Natural killer cell (primary cell): ENCODE measurements at regions of chr11 and their contacts with region 1.

Region 1: DNA sequence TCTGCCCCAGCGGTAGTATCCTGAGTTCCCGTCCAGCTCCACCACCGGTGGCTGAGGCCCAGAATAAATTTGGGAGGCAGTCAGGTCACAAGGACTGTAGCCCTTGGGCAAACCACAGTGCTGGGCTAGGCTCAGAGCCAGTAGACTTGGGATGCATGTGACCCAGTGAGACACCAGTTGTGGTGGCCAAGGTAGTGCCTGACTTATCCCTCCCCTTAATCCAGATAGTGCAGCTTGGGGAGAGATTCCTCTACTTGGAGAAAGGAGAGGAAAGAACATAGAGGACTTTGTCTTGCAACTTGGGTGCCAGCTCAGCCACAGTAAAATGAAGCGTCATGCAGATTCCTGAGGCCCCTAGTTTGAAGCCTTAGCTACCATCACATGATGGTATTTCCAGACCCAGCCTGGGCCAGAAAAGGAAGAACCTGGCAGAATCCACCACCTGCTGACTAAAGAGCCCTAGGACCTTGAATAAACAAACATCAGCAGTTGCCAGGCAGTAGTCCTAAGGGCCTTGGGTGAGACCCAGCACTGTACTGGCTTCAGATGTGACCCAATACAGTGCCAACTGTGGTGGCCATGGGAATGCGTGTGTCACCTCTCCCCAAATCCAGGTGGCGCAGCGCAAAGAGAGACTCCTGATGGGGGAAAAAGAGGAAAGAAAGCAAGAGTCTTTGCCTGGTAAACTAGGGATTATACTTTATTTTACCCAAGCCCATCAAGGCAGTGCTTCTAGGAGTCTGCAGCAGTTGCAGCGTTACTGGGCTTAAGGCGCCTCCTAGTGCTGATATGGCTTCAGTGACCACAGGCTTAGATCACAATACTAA is 17.0 kb upstream of the DDX10 start:
- DNase-seq: peak; percentile 37 to 82
- ATAC-seq: peak; percentile 75 to 96 (median 92)
- H3K4me3 ChIP-seq: no peak overlapping the region
- H3K4me3 Mint-ChIP-seq: no peak overlapping the region
- H3K27ac ChIP-seq: no peak overlapping the region
- H3K27ac Mint-ChIP-seq: no peak overlapping the region
- H3K4me1 ChIP-seq: no peaks in the 10 kb centered on the region
- H3K4me1 Mint-ChIP-seq: no peaks in the 10 kb centered on the region
- H3K27me3 ChIP-seq: no peaks in the 10 kb centered on the region
- H3K27me3 Mint-ChIP-seq: peaks cover 3 to 9% of the 10 kb centered on the region in 2 donors
- CTCF ChIP-seq: peak; percentile 79

Region 2: DNA sequence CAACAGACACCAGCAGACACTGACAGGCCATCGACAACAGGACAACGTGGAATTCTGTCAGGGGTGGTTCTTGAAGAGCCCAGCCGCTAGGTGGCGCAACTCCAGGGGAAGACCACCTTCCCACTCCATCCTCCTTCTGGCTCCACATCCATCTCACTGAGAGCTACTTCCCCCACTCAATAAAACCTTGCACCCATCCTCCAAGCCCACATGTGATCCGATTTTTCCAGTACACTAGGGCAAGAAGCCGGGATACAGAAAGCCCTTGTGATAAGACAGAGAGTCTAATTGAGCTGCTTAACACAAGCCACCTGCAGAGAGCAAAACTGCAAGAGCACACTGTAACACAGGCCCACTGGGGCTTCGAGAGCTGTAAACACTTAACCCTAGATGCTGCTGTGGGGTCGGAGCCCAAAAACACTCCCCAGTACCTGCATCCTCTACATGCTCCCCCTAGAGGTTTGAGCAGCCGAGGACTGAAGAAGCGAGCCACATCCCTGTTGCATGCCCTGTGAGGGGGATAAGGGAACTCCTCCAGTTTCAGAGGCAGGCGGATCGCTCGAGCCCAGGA is 731.2 kb before region 1 on chr11:
- intact Hi-C with region 1: loop called (anchors 5 kb)
- DNase-seq: peak; percentile 28 to 64
- ATAC-seq: peak in 1 of 3 donors; percentile 40
- H3K4me3 ChIP-seq: no peak overlapping the region
- H3K4me3 Mint-ChIP-seq: no peak overlapping the region
- H3K27ac ChIP-seq: no peak overlapping the region
- H3K27ac Mint-ChIP-seq: no peak overlapping the region
- H3K4me1 ChIP-seq: no peaks in the 10 kb centered on the region
- H3K4me1 Mint-ChIP-seq: peaks cover 0 to 5% of the 10 kb centered on the region in 2 donors
- H3K27me3 ChIP-seq: no peaks in the 10 kb centered on the region
- H3K27me3 Mint-ChIP-seq: peaks cover 2 to 5% of the 10 kb centered on the region in 2 donors
- CTCF ChIP-seq: peak; percentile 74

Region 3: GRCh38 chr11:108351458-108351857 is 296.5 kb before region 1 on chr11:
- intact Hi-C with region 1: loop called (anchors 5 kb)
- DNase-seq: no peak
- ATAC-seq: no peak
- H3K4me3 ChIP-seq: no peak overlapping the region
- H3K4me3 Mint-ChIP-seq: no peak overlapping the region
- H3K27ac ChIP-seq: no peak overlapping the region
- H3K27ac Mint-ChIP-seq: peak overlapping the region; percentile 30 to 72
- H3K4me1 ChIP-seq: no peaks in the 10 kb centered on the region
- H3K4me1 Mint-ChIP-seq: peaks cover 12 to 25% of the 10 kb centered on the region in 2 donors
- H3K27me3 ChIP-seq: no peaks in the 10 kb centered on the region
- H3K27me3 Mint-ChIP-seq: no peaks in the 10 kb centered on the region
- CTCF ChIP-seq: no peak

Region 4: DNA sequence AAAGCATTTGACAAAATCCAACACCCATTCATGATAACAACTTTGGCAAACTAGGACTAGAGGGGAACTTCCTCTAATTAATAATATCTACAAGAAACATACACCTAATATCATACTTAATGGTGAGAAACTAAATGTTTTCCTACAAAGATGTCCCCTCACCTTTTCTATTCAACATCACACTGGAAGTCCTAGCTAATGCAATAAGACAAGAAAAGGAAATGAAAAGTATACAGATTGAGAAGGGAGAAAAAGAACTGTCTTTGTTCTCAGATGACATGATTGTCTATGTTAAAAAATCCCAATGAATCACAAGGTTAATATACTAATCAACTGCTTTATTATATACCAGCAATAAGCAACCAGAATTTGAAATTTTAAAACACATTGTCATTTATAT is 233.0 kb before region 1 on chr11:
- intact Hi-C with region 1: loop called (anchors 1 kb)
- DNase-seq: no peak
- ATAC-seq: no peak
- H3K4me3 ChIP-seq: no peak overlapping the region
- H3K4me3 Mint-ChIP-seq: no peak overlapping the region
- H3K27ac ChIP-seq: no peak overlapping the region
- H3K27ac Mint-ChIP-seq: no peak overlapping the region
- H3K4me1 ChIP-seq: no peaks in the 10 kb centered on the region
- H3K4me1 Mint-ChIP-seq: no peaks in the 10 kb centered on the region
- H3K27me3 ChIP-seq: no peaks in the 10 kb centered on the region
- H3K27me3 Mint-ChIP-seq: no peaks in the 10 kb centered on the region
- CTCF ChIP-seq: no peak